Mammary epithelial cell (primary cell): ENCODE measurements at regions of chr4 and their contacts with region 1.

Region 1: GRCh38 chr4:122602277-122603142 is 18.4 kb downstream of the IL21 start:
- DNase-seq: peak; percentile 40
- H3K4me3 ChIP-seq: peak overlapping the region; percentile 10 to 21 (median 17)
- H3K27ac ChIP-seq: no peak overlapping the region
- H3K4me1 ChIP-seq: peaks cover 10% of the 10 kb centered on the region
- H3K27me3 ChIP-seq: peaks cover 2% of the 10 kb centered on the region
- CTCF ChIP-seq: peak; percentile 42 to 61

Region 2: GRCh38 chr4:122652379-122652778 is 49.9 kb after region 1 on chr4:
- CTCF ChIA-PET with region 1: no interaction called
- dilution Hi-C with region 1: no loop called
- in situ Hi-C with region 1: no loop called
- intact Hi-C with region 1: loop called (anchors 5 kb)
- DNase-seq: peak; percentile 30
- H3K4me3 ChIP-seq: no peak overlapping the region
- H3K27ac ChIP-seq: no peak overlapping the region
- H3K4me1 ChIP-seq: no peaks in the 10 kb centered on the region
- H3K27me3 ChIP-seq: no peaks in the 10 kb centered on the region
- CTCF ChIP-seq: peak; percentile 70 to 71

Region 3: DNA sequence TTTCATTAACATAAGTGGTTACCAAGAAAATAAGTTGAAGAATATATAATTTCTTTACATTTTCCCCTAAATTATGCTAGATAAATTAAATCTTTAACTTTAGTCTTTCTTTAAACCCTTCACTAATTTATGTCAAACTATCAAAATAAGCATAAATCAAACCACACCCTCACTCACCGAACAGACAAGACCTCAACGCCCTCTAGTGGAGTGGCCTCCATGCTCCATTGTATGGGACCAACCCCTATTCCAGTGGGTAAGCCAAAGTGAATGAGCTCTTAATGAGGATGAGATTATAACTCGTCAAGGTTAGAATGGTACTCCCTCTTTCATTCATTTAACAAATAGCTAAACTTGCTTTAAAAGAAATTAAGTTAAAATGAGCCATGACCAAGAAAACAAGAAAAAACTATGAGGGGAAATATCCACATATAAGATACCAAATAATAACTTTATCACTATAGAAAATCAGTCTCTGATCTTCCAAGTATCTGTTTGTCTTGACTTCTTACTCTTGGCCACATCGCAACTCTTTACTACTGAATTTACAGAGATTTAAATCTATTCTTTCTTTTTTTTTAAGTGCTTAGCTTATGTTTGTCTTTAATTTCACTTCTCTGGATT is 114.4 kb after region 1 on chr4:
- CTCF ChIA-PET with region 1: interaction called, 13 read pairs
- dilution Hi-C with region 1: loop called (anchors 25 kb)
- in situ Hi-C with region 1: no loop called
- intact Hi-C with region 1: loop called (anchors 1 kb)
- DNase-seq: peak; percentile 48
- H3K4me3 ChIP-seq: no peak overlapping the region
- H3K27ac ChIP-seq: no peak overlapping the region
- H3K4me1 ChIP-seq: peaks cover 3% of the 10 kb centered on the region
- H3K27me3 ChIP-seq: no peaks in the 10 kb centered on the region
- CTCF ChIP-seq: peak; percentile 90 to 93

Region 4: GRCh38 chr4:122922877-122923511 is 320.5 kb after region 1 on chr4:
- CTCF ChIA-PET with region 1: no interaction called
- dilution Hi-C with region 1: loop called (anchors 25 kb)
- in situ Hi-C with region 1: loop called in 1 of 2 experiments (anchors 10 kb)
- intact Hi-C with region 1: no loop called
- DNase-seq: peak; percentile 81
- H3K4me3 ChIP-seq: peak overlapping the region; percentile 72 to 99 (median 85)
- H3K27ac ChIP-seq: peak overlapping the region; percentile 61
- H3K4me1 ChIP-seq: peaks cover 8% of the 10 kb centered on the region
- H3K27me3 ChIP-seq: no peaks in the 10 kb centered on the region
- CTCF ChIP-seq: no peak

Region 5: DNA sequence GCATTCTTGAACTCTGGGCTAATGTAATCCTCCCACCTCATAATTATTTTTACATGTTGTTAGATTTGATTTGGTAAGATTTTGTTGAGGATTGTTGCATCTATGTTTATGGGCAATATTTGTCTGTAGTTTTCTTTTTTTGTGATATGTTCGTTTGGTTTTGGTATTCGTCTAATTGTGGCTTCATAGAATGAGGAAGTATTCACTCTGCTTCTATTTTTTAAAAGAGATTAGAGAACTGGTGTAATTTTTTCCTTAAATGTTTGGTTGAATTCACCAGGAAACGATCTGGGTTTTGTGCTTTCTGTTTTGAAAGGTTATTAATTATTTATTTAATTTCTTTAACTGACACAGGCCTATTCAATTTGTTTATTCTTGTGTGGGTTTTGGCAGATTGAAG is 481.1 kb after region 1 on chr4:
- CTCF ChIA-PET with region 1: no interaction called
- dilution Hi-C with region 1: no loop called
- in situ Hi-C with region 1: no loop called
- intact Hi-C with region 1: loop called (anchors 10 kb)
- DNase-seq: no peak
- H3K4me3 ChIP-seq: no peak overlapping the region
- H3K27ac ChIP-seq: no peak overlapping the region
- H3K4me1 ChIP-seq: no peaks in the 10 kb centered on the region
- H3K27me3 ChIP-seq: no peaks in the 10 kb centered on the region
- CTCF ChIP-seq: no peak